Activated CD4-positive, alpha-beta memory T cell treated with anti-CD3 and anti-CD28 coated beads, Interleukin-2, amount 10 ng/mL, durations not matched to agents 7 days and 5 days (primary cell): ENCODE measurements at regions of chr2 and their contacts with region 1.

Region 1: DNA sequence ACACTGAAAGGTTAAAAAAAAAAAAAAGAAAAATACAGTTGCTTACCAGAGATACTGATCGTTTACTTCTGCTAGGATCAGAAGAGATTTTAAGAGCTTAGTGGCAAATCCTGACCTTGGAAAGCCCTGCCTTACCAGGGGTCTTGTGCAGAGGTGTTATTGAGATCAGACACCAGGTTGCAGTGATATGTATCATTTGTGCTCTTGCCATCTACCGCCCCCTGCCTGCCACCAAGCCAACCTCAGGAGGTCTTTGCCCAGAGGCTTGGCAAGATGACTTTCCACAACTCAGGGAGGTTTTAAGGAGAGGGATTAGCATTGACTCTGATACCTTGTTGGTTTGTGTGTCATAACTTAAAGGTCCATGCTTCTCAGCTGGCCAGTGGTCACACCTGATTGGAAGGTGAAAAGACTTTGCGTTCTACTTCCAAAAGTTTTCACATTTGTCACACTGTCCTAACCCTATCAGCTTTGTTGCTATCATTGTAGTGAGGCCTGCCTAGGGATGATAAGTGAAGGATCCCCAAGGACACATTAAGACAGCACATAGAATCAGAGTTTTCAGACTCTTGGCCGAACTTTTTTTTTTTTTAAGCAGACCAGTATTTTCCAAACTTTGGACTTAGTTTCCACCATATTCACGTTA is 46.2 kb upstream of the MGAT5 start:
- DNase-seq: peak; percentile 63
- H3K4me3 Mint-ChIP-seq: no peak overlapping the region
- H3K27ac Mint-ChIP-seq: no peak overlapping the region
- H3K4me1 Mint-ChIP-seq: peaks cover 6% of the 10 kb centered on the region
- H3K27me3 Mint-ChIP-seq: no peaks in the 10 kb centered on the region

Region 2: GRCh38 chr2:134181210-134181609 is 26.5 kb before region 1 on chr2:
- CTCF ChIA-PET with region 1: interaction called, 10 read pairs
- POLR2A ChIA-PET with region 1: no interaction called
- DNase-seq: peak; percentile 56
- H3K4me3 Mint-ChIP-seq: no peak overlapping the region
- H3K27ac Mint-ChIP-seq: peak overlapping the region; percentile 61
- H3K4me1 Mint-ChIP-seq: peaks cover 57% of the 10 kb centered on the region
- H3K27me3 Mint-ChIP-seq: no peaks in the 10 kb centered on the region

Region 3: GRCh38 chr2:134191835-134192234 is 15.9 kb before region 1 on chr2:
- CTCF ChIA-PET with region 1: no interaction called
- POLR2A ChIA-PET with region 1: no interaction called
- DNase-seq: no peak
- H3K4me3 Mint-ChIP-seq: no peak overlapping the region
- H3K27ac Mint-ChIP-seq: no peak overlapping the region
- H3K4me1 Mint-ChIP-seq: peaks cover 22% of the 10 kb centered on the region
- H3K27me3 Mint-ChIP-seq: no peaks in the 10 kb centered on the region